ENCODE measurements at regions of chr10 and their contacts with region 1.

Region 1: DNA sequence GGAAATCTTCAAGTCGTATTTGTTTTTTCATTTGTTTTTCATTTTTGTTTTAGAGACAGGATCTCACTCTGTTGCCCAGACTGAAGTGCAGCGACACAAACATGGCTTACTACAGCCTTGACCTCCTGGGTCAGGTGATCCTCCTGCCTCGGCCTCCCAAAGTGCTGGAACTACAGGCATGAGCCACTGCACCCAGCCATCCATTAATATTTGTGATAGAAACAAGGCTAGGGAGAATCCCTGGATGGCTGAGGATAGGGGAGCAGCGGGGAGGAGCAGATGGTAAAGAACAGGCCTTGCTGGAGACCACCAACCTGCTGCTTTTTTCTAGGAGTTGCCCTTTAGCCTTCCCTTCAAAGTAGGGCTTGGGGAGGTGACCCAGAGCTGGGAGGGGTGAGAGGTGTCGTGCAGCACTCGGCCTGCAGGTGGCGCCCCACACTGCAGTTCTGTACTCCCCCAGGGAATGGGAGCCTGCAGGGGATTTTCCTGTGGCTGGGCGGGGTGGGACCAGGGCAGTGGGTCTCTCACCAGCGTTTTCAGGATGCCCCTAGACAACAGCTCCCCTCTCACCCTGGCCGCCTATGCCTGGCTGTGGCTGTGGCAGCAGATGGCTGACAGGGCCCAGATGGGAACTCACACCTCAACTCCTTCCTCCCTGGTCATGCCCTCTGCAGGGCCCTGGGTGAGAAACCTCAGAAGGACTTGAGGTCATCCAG is 12.6 kb upstream of the CDH23 start:
- DNase-seq: peak; percentile 73
- H3K4me3 ChIP-seq: no peak overlapping the region
- H3K27ac ChIP-seq: no peak overlapping the region
- H3K4me1 ChIP-seq: no peaks in the 10 kb centered on the region
- H3K27me3 ChIP-seq: peaks cover 6% of the 10 kb centered on the region
- CTCF ChIP-seq: peak; percentile 93

Region 2: DNA sequence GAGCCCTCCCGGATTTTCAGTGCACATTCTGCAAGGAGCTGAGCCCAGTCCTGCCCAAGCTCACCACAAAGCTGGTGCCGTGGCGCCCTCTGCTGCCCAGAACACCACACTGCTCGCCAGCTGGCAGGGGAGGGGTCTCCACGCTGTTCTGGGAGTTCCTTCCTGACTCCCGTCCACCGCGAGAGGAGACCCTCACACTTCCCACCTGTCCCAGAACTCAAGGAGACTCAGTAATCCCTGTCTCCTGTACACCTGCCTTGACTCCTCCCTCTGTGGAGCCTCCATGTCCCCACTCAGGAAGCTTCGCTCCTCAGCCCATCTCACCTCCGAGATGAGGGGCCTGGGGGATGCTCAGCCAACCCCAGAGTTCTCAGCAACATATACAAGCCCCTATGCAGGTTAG is 324.2 kb after region 1 on chr10:
- intact Hi-C with region 1: loop called (anchors 5 kb)
- DNase-seq: peak; percentile 58
- H3K4me3 ChIP-seq: no peak overlapping the region
- H3K27ac ChIP-seq: no peak overlapping the region
- H3K4me1 ChIP-seq: peaks cover 34% of the 10 kb centered on the region
- H3K27me3 ChIP-seq: no peaks in the 10 kb centered on the region
- CTCF ChIP-seq: peak; percentile 91

Region 3: DNA sequence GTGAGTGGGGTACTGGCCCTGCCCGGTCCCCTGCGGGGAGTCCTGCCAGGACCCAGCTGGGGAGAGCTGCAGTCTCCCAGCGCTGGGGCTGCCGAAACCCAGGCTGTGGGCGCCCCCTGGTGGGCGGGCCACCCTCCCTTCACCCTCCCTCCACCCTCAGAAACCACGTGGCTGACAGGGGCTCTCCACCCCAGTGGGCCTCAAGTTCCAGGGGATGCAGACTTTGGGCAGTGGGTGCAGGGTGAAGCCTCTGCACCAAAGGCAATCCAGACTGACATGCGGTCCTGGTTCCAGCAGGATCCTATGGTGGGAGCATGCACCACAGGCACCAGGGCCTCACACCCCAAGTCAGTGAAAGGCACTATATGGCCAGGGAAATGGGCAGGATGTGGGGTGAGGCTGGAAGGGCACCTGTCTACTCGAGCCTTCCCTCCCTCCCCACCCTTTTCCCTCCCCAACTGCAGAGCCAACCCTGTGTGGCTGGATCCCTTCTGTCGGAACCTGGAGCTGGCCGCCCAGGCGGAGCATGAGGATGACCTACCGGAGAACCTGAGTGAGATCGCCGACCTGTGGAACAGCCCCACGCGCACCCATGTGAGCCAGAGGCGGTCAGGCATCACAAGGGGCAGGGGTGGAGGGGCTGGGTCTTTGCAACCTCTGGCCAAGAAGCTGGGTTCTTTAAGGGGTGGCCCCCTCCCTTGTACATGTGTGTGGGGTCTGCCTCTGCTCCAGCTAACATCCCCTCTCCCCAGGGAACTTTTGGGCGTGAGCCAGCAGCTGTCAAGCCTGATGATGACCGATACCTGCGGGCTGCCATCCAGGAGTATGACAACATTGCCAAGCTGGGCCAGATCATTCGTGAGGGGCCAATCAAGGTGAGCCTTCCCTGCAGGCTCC is 428.1 kb after region 1 on chr10:
- intact Hi-C with region 1: loop called (anchors 10 kb)
- DNase-seq: peak; percentile 68
- H3K4me3 ChIP-seq: no peak overlapping the region
- H3K27ac ChIP-seq: no peak overlapping the region
- H3K4me1 ChIP-seq: peaks cover 34% of the 10 kb centered on the region
- H3K27me3 ChIP-seq: peaks cover 12% of the 10 kb centered on the region
- CTCF ChIP-seq: peak; percentile 88